ENCODE measurements at regions of chr2 and their contacts with region 1.

Region 1: DNA sequence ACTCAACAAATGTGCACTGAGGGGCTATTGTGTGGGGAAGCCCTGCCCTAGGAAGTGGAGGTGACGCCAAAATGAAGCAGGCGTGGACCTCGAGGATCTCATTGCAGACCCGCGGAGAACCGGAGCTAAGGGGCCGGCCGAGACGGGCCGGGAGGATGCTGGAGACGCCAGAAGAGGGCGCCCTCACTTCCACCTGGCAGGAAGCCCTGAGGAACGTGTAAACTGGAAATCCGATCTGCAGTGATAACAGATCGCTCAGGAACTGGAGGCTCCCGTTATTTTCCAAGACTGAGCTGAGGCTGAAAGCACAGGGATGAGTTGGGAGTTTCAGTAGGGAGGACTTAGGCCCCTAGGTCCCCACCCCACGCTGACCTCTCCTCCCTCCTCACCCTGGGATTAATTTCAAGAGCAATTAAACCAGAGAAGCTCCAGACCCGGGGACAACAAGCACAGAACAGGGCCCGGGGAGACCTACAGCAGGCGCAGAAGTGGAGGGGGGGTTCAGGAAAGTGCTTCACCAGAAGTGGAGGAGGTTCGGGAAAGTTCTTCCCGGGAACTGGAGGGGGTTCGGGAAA is 7.7 kb upstream of the COL6A3 start:
- H3K4me3 ChIP-seq: no peak overlapping the region; the same call in 1 of the 2 replicates
- H3K27ac ChIP-seq: no peak overlapping the region
- H3K4me1 ChIP-seq: peaks cover 5% of the 10 kb centered on the region
- CTCF ChIP-seq: peak; percentile 61

Region 2: GRCh38 chr2:237254369-237254861 is 167.2 kb before region 1 on chr2:
- CTCF ChIA-PET with region 1: no interaction called
- POLR2A ChIA-PET with region 1: no interaction called
- H3K4me3 ChIP-seq: no peak overlapping the region
- H3K27ac ChIP-seq: no peak overlapping the region
- H3K4me1 ChIP-seq: no peaks in the 10 kb centered on the region; the same call in 1 of the 2 replicates
- CTCF ChIP-seq: no peak

Region 3: DNA sequence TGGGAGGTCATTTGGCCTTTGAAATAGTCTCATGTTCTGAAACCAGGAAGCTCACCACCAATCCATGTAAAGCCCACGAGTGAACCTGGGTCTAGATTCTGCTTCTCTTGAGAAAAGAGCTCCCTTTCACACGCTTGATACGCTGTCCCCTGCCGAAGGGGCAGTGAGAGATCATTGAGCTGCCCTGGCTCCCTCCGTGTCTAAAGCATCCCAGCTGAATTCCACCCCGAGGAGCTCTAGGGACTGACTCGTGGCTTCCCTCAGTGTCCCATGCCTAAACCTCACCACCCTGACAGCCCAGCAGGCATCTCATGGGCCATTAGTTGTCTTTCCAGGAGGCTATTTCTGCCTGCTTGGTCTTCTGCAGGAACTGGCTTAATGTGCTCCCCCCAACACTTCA is 76.2 kb before region 1 on chr2:
- CTCF ChIA-PET with region 1: no interaction called
- POLR2A ChIA-PET with region 1: no interaction called
- H3K4me3 ChIP-seq: no peak overlapping the region
- H3K27ac ChIP-seq: no peak overlapping the region
- H3K4me1 ChIP-seq: no peaks in the 10 kb centered on the region
- CTCF ChIP-seq: no peak

Region 4: DNA sequence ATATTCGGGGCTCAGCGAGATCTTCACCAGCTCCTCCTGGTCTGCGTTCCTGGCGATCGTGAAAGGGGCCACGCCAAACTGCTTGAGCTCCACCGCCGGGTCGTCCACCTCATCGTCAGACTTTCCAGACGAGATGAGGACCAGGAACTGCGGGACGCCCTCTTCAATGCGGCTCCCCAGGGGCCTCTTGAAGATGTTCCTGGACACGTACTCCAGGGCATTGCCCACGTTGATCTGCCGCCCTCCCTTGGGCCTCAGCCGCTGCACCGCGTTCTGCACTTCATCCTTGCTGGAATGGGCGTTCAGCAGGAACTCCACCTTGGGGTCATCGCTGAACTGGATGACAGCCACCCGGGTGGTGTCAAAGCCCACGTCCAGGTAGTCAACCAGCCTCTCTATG is 49.8 kb before region 1 on chr2:
- CTCF ChIA-PET with region 1: no interaction called
- POLR2A ChIA-PET with region 1: no interaction called
- H3K4me3 ChIP-seq: no peak overlapping the region
- H3K27ac ChIP-seq: no peak overlapping the region
- H3K4me1 ChIP-seq: no peaks in the 10 kb centered on the region
- CTCF ChIP-seq: no peak

Region 5: GRCh38 chr2:237403024-237403882 is 18.4 kb before region 1 on chr2:
- CTCF ChIA-PET with region 1: interaction called, 72 read pairs
- POLR2A ChIA-PET with region 1: no interaction called
- H3K4me3 ChIP-seq: no peak overlapping the region
- H3K27ac ChIP-seq: no peak overlapping the region
- H3K4me1 ChIP-seq: no peaks in the 10 kb centered on the region
- CTCF ChIP-seq: no peak

Region 6: DNA sequence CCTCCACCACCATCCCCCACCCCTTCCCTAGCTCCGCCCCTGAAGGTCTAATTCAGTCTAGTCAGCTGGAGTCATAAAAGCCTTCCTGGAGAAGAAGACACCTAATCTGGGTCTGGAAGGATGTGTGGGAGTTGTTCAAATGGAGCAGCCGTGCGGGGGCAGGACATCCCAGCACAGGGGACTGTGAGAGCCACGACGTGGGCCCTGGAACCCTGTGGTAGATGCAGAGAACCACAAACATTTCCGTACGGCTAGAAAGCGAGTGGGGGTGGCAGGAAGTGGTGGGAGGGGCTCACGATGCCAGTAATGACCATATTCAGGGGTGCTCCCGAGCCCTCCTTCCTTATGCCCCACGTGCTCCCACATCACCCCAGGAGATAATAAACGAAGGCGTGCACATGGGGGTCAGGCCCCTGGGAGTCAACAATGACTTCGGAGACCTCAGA is 13.3 kb after region 1 on chr2:
- CTCF ChIA-PET with region 1: interaction called, 27 read pairs
- POLR2A ChIA-PET with region 1: no interaction called
- H3K4me3 ChIP-seq: no peak overlapping the region
- H3K27ac ChIP-seq: no peak overlapping the region
- H3K4me1 ChIP-seq: no peaks in the 10 kb centered on the region
- CTCF ChIP-seq: no peak

Region 7: DNA sequence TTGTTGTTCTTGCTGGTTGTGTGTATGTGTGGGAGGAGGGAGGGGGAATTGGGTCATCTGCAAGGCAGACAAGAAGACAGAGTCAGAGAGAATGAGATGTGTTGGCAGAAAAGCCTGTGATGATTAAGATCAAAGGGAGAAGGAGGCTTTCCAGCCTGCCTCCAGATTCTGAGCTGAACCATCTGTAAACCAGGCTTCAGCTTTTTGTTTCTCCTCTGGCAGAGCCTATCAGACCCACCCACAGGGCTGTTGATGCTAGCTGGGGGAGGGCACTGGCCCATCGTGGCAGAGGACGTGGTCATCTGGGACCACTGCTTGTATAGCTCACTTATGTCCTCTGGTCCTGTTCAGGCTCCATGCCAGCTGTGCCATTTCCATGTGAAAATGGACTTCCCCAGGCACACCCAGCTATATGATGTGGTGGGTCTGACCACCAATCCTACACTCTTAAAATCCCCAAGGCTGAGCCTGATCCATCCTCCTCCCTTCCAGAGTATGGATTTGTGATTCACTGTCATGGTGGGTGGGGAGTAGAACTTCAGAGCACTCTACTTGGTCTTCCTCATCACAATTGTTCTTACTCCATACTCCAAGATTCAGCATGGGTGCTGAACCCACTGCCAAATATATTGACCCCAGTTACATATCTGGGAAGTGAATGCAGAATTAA is 20.1 kb after region 1 on chr2:
- CTCF ChIA-PET with region 1: interaction called, 18 read pairs
- POLR2A ChIA-PET with region 1: no interaction called
- H3K4me3 ChIP-seq: no peak overlapping the region
- H3K27ac ChIP-seq: no peak overlapping the region
- H3K4me1 ChIP-seq: no peaks in the 10 kb centered on the region
- CTCF ChIP-seq: no peak

Region 8: DNA sequence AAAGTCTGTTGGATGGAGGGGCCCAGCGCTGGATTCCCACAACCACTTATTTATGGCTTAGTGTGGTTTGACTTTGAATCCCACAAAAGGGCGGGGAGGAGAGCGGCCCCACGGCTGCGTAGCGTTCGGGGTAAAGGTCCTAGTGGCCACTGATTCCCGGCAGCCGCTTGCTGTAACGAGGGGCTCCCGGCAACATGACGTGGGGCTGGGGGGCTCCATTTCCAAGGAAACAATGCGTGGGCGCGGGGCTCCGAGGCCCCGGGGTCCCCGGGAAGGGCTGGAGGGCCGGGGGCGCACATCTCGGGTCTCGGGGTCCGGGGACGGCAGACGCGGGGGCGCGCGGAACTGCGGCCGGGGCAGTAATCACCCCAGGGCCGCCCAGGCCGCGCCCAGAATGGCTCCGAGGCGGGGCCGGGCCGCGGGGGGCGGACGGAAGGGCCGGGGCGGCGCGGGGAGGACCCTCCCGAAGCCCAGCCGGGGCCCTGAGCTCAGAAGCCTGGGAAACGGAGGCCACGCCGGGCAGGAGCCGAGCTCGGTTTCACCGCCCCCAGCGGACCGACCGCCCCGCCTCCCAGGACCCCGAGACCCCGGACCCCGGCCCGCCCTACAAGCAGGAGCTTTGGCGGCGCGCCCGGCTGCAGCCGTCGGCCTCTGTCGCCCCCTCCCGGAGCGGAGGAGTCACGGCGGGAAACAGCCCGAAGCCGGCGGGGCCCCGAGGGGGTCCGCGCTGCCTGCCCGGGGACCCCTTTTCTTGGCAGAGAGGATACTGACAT is 53.5 kb after region 1 on chr2:
- CTCF ChIA-PET with region 1: interaction called, 23 read pairs
- POLR2A ChIA-PET with region 1: interaction called, 3 read pairs
- H3K4me3 ChIP-seq: peak overlapping the region; percentile 65
- H3K27ac ChIP-seq: peak overlapping the region; percentile 79
- H3K4me1 ChIP-seq: no peaks in the 10 kb centered on the region
- CTCF ChIP-seq: peak; percentile 81